ENCODE measurements at regions of chr2 and their contacts with region 1.

Region 1: DNA sequence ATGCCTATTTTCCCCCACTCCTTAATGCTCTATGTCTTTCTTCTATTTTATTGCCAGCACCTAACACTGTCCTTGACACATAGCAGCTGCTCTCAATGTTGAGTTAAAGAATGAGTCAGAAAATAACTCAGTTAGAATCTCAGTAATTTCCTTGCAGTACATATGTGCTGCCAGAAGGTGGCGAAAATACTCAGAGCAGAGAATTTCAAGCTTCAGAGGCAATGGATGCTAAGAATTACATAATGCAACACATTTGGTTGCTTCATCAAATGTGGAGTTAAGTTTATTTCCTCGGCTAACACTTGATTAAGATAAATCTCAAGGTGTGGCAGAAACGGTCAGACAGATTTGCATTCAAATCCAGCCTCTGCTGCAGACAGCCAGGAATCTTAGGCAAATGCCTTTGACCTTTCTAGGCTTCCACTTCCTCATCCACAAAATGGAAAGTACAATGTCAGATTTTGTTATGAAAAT is 105.6 kb downstream of the VSNL1 start:
- DNase-seq: no peak
- ATAC-seq: peak; percentile 60

Region 2: DNA sequence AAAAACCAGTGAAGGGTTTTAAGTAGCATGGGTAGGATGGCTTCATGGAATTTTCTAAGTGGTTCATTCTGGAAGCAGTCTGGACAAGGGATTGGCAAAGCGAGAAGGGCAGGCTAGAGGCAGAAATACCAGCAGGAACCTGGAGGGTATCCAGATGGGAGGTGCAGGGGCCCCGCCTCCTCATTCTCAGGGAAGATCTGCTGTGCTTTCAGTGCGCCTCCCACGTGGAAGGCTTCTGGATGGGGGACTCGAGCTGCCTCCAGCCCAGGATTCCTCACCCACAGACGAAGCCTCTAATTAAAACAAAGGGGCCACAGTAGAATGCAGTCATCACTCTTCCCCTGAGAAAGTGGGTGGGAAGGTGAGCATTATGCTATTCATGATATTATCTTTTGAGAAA is 25.8 kb before region 1 on chr2:
- intact Hi-C with region 1: loop called (anchors 1 kb)
- DNase-seq: no peak
- ATAC-seq: peak; percentile 92

Region 3: DNA sequence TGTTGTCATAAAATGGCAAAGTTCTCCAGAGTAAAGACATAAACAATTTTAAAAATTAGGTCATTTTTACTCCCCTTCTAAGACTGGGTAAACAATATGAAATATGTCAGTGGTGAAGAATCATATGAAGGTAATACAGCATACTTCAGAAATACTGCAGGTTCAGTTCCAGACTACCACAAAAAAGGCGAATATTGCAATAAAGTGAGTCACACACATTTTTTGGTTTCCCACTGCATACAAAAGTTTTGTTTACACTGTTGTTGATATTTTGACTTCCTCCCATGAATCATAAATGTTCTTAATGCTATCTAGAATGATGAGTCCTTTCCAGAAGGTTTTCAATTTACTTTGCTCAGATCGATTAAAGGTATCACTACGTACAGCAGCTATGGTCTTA is 34.0 kb after region 1 on chr2:
- intact Hi-C with region 1: no loop called
- DNase-seq: no peak
- ATAC-seq: no peak

Region 4: DNA sequence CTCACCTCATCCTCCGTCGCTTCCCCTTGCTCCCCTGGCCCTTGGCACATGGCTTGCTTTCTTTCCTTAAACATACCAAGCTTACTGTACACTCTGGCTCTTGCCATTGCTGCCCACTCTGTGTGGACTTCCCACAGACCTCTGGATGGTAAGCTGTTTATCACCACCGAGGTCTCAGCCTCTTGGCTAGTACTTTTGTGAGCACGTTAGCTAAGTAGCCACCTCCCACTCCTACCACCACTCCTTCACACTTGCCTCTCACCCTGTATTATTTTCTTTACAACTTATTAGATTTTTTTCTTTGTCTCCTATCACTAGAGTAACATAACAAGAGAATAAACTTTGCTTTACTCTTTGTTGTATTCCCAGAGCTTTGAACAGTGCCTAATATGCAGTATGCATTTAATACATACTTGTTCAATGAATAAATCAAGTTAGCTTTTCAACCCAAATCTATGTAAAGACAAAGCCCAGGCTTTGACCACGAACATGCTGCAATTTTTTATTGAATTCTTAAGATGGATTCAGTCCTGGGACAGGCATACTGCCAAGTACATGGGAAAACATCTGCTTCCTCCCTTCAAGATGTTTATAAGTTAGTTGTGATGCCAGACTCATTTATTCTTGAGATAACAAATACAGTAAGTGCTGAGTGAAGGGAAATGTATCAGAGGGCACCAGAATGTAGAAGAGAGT is 145.2 kb after region 1 on chr2:
- intact Hi-C with region 1: no loop called
- DNase-seq: no peak
- ATAC-seq: no peak

Measured in Right ventricle myocardium inferior (tissue), 1 donor.